Endothelial cell of umbilical vein (primary cell): ENCODE measurements at regions of chr12 and their contacts with region 1.

Region 1: DNA sequence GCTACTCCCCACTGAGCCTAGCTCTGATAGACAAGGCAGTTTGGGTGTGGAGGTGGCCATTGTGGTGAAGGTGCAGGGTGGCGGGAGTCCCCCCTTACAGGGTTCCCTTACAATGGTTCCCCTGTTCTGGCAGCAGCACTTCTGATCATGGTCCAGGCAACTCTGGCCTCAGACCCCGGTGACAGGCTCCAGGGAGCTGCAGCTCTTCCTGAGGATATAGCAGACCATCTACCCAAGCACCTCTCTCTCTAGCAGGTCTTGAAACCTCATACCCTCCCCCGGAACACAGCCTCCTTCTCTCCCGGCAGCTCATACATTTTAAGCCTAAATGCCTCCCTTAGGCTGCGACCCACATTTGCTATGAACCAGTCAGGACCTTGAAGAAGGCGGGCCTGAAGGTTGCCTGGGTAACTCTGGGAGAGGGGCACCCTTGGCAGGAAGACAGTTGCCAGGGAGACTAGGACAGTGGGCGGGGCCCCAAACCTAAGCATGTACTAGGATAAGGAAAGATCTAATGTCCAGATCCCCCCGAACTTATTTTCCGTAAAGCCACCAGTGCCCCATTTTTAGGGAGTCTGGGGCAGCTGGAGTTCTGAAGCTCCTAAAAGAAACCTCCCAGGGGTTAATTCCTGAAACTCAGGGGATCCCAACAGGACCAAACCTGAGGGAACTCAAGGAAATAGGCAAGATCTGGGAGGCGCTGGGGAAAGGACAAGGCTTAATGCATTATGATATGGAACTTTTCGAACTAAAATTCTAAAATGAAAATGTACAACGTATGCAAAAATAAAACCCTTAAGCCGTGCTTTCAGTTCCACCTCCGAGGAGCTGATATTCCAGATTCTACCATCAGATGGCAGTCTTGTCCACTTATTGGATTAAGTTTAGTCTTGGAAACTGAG is 4.5 kb upstream of the GDF11 start:
- DNase-seq: peak; percentile 90
- H3K4me3 ChIP-seq: peak overlapping the region; percentile 57 to 91 (median 83)
- H3K27ac ChIP-seq: no peak overlapping the region
- H3K4me1 ChIP-seq: peaks cover 14% of the 10 kb centered on the region
- H3K27me3 ChIP-seq: no peaks in the 10 kb centered on the region
- CTCF ChIP-seq: peak; percentile 54 to 79
- POLR2A ChIP-seq: no peak

Region 2: DNA sequence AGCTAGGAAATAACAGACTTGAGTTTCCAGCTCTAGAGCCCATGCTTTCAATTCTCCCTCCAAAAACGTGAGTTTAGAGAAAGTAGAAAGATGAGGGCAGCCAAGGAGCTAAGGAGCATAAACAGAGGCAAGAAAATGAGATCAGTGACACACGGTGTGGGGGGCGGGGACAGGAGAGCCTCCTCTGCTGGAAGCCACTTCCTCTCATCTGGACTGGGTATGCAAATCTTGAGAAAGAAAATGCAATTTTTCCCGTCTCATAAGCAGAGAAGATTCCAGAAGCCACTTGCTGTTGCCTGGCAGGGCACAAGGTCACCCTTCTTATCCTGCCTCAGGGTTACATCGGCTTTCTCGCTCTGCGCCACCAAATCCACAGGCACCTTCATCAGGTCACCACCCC is 95.7 kb before region 1 on chr12:
- CTCF ChIA-PET with region 1: interaction called, 7 read pairs
- POLR2A ChIA-PET with region 1: no interaction called
- dilution Hi-C with region 1: no loop called
- intact Hi-C with region 1: loop called (anchors 1 kb)
- DNase-seq: no peak
- H3K4me3 ChIP-seq: no peak overlapping the region
- H3K27ac ChIP-seq: no peak overlapping the region
- H3K4me1 ChIP-seq: no peaks in the 10 kb centered on the region
- H3K27me3 ChIP-seq: peaks cover 3 to 6% of the 10 kb centered on the region in 2 experiments
- CTCF ChIP-seq: no peak
- POLR2A ChIP-seq: no peak

Region 3: DNA sequence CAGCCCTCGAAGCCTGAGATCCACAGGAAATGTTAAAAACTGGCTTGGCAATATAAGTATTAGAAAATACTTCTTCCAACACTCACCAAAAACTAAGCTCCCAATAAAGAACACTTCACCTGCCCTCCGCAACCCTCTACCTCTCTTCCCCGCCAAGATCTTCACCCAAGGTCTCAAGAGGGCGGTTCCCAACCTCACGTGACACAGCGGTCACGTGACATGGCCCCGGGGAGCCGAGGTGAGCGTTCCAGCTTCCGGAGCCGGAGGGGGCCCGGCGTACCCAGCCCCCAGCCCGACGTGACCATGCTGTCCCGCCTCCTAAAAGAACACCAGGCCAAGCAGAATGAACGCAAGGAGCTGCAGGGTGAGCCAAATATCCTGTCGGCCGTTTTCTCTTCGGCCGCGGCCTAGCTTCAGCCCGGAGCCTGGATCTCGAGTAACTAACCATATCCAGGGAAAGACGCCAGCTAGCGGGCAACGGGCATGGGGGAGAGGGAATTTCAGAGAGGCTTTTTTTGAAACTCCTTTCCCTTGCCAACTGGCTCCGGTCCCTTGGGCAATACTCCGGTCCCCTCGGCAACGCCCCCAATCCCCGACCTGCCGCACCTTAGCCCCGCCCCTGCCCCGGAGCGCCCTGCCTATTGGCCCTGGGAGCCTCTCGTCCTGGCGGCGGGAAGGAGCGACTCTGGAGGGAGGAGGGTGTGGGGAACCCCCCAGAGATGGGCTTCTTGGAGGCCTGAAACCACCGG is 22.4 kb before region 1 on chr12 and contains the start of gene BLOC1S1:
- CTCF ChIA-PET with region 1: interaction called, 151 read pairs
- POLR2A ChIA-PET with region 1: no interaction called
- dilution Hi-C with region 1: no loop called
- intact Hi-C with region 1: no loop called
- DNase-seq: peak; percentile 84
- H3K4me3 ChIP-seq: peak within 1 kb of the TSS; percentile 66 to 94 (median 82)
- H3K27ac ChIP-seq: peak within 1 kb of the TSS; percentile 83
- H3K4me1 ChIP-seq: peaks cover 24% of the 10 kb centered on the region
- H3K27me3 ChIP-seq: peaks cover 11 to 17% of the 10 kb centered on the region in 2 experiments
- CTCF ChIP-seq: no peak
- POLR2A ChIP-seq: no peak
- total RNA-seq, gene BLOC1S1: 84.1 and 85.6 TPM in 2 replicates

Region 4: DNA sequence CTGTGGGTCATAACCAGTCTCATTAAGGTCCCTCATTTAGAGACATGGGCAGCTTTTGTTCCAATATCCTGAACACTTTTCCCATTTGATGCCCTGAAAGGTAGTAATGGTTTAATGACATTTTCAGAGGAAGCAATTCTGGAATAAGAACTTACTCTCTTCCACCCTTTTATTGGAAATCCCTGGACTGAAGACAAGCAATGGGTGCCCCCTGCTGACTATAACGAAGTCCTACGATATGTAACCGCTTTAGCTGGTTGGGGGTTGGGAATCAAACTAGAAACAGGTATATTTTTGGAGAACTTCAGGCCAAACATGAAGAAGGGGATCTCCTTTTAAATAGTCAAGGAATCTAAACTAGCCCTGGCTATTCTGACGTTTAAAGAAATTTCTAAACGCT is 58.7 kb after region 1 on chr12:
- CTCF ChIA-PET with region 1: interaction called, 56 read pairs
- POLR2A ChIA-PET with region 1: no interaction called
- dilution Hi-C with region 1: no loop called
- intact Hi-C with region 1: loop called (anchors 1 kb)
- DNase-seq: peak; percentile 41
- H3K4me3 ChIP-seq: no peak overlapping the region
- H3K27ac ChIP-seq: no peak overlapping the region
- H3K4me1 ChIP-seq: no peaks in the 10 kb centered on the region
- H3K27me3 ChIP-seq: no peaks in the 10 kb centered on the region
- CTCF ChIP-seq: peak; percentile 31 to 41
- POLR2A ChIP-seq: no peak

Region 5: DNA sequence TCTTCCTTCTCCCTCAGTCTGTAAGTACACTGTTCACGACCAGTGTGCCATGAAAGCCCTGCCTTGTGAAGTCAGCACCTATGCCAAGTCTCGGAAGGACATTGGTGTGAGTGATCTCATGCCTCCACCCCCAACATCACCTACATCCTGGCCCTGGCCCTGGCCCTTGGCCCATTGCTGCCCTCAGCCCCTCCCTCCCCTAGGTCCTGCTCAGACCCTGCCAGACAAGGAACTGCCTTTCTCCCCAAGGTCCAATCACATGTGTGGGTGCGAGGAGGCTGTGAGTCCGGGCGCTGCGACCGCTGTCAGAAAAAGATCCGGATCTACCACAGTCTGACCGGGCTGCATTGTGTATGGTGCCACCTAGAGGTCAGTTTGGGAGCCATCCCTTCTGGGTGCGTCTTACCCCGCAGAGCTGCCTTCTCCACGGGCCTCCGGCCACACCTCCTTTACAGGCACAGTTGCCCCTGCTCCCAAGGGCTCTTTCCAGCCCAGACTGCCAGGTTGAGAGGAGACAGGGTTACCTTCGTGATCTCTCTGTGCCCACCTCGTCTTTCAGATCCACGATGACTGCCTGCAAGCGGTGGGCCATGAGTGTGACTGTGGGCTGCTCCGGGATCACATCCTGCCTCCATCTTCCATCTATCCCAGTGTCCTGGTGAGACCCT is 201.8 kb after region 1 on chr12:
- CTCF ChIA-PET with region 1: interaction called, 66 read pairs
- POLR2A ChIA-PET with region 1: no interaction called
- dilution Hi-C with region 1: no loop called
- intact Hi-C with region 1: loop called (anchors 1 kb)
- DNase-seq: peak; percentile 85
- H3K4me3 ChIP-seq: no peak overlapping the region
- H3K27ac ChIP-seq: no peak overlapping the region
- H3K4me1 ChIP-seq: no peaks in the 10 kb centered on the region
- H3K27me3 ChIP-seq: no peaks in the 10 kb centered on the region
- CTCF ChIP-seq: peak; percentile 89 to 98
- POLR2A ChIP-seq: no peak

Region 6: DNA sequence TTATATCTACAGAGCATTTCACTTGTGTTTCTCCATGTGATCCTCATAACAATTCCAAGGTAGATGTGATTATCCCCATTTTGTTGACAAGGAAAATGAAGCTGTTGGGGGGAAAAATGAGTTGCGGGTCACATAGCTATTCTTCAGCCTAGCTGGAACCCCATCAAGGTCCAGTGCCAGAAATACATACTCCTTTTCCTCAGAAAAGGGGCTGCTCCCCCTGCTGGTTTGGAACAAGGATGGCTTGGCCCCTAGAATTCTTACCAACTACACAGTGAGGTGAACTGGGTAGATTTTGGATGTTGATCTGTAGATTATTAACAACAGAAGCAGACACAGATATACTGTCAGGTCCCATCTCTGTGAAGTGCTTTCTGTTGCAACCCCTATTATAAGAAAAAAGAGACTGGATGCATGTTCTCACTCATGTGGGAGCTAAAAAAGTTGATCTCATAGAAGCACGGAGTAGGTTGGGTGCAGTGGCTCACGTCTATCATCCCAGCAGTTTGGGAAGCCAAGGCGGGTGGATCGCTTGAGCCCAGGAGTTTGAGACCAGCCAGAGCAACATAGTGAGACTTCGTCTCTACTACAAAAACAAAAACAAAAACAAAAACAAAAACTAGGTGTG is 291.4 kb after region 1 on chr12:
- CTCF ChIA-PET with region 1: interaction called, 50 read pairs
- POLR2A ChIA-PET with region 1: no interaction called
- dilution Hi-C with region 1: no loop called
- intact Hi-C with region 1: loop called (anchors 1 kb)
- DNase-seq: peak; percentile 76
- H3K4me3 ChIP-seq: peak overlapping the region in 1 of 3 experiments; percentile 38
- H3K27ac ChIP-seq: peak overlapping the region; percentile 14
- H3K4me1 ChIP-seq: peaks cover 17% of the 10 kb centered on the region
- H3K27me3 ChIP-seq: no peaks in the 10 kb centered on the region
- CTCF ChIP-seq: peak; percentile 82 to 89
- POLR2A ChIP-seq: no peak

Region 7: GRCh38 chr12:56117778-56118687 is 379.7 kb after region 1 on chr12 and contains the start of gene ZC3H10:
- CTCF ChIA-PET with region 1: interaction called, 6 read pairs
- POLR2A ChIA-PET with region 1: interaction called, 7 read pairs
- dilution Hi-C with region 1: no loop called
- intact Hi-C with region 1: loop called (anchors 1 kb)
- DNase-seq: peak; percentile 99
- H3K4me3 ChIP-seq: peak within 1 kb of the TSS; percentile 70 to 98 (median 72)
- H3K27ac ChIP-seq: peak within 1 kb of the TSS; percentile 86
- H3K4me1 ChIP-seq: peaks cover 24% of the 10 kb centered on the region
- H3K27me3 ChIP-seq: no peaks in the 10 kb centered on the region
- CTCF ChIP-seq: peak; percentile 42 to 62
- POLR2A ChIP-seq: peak; percentile 100
- total RNA-seq, gene ZC3H10: 8.7 and 10.1 TPM in 2 replicates